SK-N-SH (cell line): ENCODE measurements at regions of chr10 and their contacts with region 1.

Region 1: GRCh38 chr10:99612167-99612831 is 7.9 kb downstream of the SLC25A28 start:
- DNase-seq: peak; percentile 77
- H3K4me3 ChIP-seq: peak overlapping the region in 1 of 2 experiments; percentile 11; a peak in 1 of 4 replicates
- H3K27ac ChIP-seq: no peak overlapping the region
- H3K4me1 ChIP-seq: no peaks in the 10 kb centered on the region; a peak in 1 of 4 replicates
- H3K27me3 ChIP-seq: no peaks in the 10 kb centered on the region
- CTCF ChIP-seq: peak; percentile 84
- EP300 ChIP-seq: no peak
- RAD21 ChIP-seq: peak; percentile 87

Region 2: GRCh38 chr10:99444383-99445045 is 167.8 kb before region 1 on chr10:
- CTCF ChIA-PET with region 1: interaction called, 118 read pairs
- POLR2A ChIA-PET with region 1: no interaction called
- DNase-seq: no peak
- H3K4me3 ChIP-seq: no peak overlapping the region
- H3K27ac ChIP-seq: no peak overlapping the region
- H3K4me1 ChIP-seq: no peaks in the 10 kb centered on the region
- H3K27me3 ChIP-seq: peaks cover 11% of the 10 kb centered on the region; the same call in 1 of the 2 replicates
- CTCF ChIP-seq: no peak
- EP300 ChIP-seq: no peak
- RAD21 ChIP-seq: no peak

Region 3: GRCh38 chr10:99595770-99596465 is 16.4 kb before region 1 on chr10:
- CTCF ChIA-PET with region 1: interaction called, 21 read pairs
- POLR2A ChIA-PET with region 1: no interaction called
- DNase-seq: no peak
- H3K4me3 ChIP-seq: no peak overlapping the region
- H3K27ac ChIP-seq: no peak overlapping the region
- H3K4me1 ChIP-seq: no peaks in the 10 kb centered on the region
- H3K27me3 ChIP-seq: peaks cover 22% of the 10 kb centered on the region; the same call in 1 of the 2 replicates
- CTCF ChIP-seq: no peak
- EP300 ChIP-seq: no peak
- RAD21 ChIP-seq: no peak